HepG2 (cell line): ENCODE measurements at regions of chr13 and their contacts with region 1.

Region 1: DNA sequence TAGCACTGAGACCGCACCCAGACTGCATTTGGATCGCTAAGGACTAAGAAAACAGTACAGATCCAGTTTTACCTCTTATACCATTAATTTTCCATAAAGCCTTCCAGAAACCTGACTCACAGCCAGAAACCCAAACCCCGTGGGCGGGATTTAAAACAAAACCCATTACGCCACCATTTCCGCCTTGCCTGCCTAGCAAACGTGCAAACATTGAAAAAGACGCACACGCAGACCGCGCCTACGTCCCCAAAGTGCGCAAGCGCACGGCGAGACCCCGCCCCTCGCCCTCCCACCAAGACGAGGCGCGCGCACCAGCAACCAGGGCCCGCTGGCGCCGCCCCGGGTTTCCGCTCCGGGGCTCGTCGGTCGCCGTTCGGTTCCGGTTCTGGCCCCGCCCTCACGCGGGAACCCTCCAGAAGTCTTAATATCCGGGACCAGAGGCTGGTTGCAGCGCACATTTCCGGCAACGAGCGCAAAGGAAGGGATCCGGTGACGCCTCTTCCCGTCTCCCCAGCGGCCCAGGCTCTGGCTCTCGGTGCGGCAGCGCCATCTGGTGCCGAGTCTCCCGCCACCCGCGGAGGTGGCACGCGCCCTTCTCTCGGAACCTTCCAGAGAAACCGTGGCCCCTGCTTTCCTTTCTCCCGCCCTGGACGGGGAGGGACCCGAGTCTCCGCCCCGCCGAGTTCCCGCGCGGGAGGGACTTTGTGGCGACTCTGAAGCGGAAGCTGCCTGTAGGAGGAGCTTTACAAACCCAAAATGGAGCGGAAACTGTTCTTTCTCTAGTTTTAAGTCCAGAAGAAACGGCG is 256.9 kb upstream of the STARD13 start:
- DNase-seq: peak; percentile 96
- ATAC-seq: peak; percentile 96
- H3K4me3 ChIP-seq: peak overlapping the region; percentile 57 to 85 (median 74)
- H3K27ac ChIP-seq: peak overlapping the region; percentile 99
- H3K4me1 ChIP-seq: peaks cover 42% of the 10 kb centered on the region
- H3K27me3 ChIP-seq: no peaks in the 10 kb centered on the region; a peak in 1 of 5 replicates
- CTCF ChIP-seq: peak; percentile 99
- EP300 ChIP-seq: peak in 1 of 2 experiments; percentile 77; a peak in 2 of 4 replicates
- POLR2A ChIP-seq: peak; percentile 57 to 81; a peak in 3 of 4 replicates
- RAD21 ChIP-seq: peak; percentile 99

Region 2: DNA sequence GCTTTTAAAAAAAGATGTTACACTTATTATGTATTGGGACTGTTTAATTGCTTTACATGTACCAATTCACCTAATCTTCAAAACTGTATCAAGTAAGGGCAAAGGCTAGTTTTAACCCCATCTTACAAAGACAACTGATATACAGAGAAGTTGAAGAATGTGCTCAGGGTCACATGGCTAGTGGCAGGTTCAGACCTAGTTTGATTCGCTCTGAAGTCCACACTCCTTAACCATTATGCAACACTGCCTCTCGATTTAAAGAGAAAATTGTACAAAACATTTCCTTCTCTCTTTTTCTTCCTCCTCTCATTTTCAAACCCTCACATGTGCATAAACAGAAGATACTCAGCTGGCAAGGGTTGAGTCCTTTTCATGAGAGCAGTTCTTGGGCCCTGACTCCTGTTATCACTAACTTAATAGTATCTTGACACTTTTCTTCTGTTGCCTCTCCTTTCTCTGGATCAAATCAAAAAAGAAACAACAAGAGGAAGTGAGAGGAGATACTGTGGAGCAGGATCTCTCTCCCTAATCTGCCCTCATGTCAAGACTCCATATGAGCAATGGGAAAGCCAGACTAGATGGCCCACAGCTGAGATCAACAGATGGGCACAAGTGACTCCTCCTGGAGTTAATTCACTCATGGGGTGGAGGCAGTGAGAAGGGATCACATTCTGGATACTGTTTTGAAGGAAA is 1095.6 kb before region 1 on chr13:
- CTCF ChIA-PET with region 1: no interaction called
- POLR2A ChIA-PET with region 1: no interaction called
- in situ Hi-C with region 1: no loop called
- intact Hi-C with region 1: no loop called
- DNase-seq: no peak
- ATAC-seq: peak; percentile 17; the same call in 2 of the 3 replicates
- H3K4me3 ChIP-seq: peak overlapping the region in 1 of 3 experiments; percentile 12; a peak in 1 of 6 replicates
- H3K27ac ChIP-seq: peak overlapping the region; percentile 66
- H3K4me1 ChIP-seq: peaks cover 57% of the 10 kb centered on the region
- H3K27me3 ChIP-seq: no peaks in the 10 kb centered on the region
- CTCF ChIP-seq: no peak
- EP300 ChIP-seq: no peak
- POLR2A ChIP-seq: no peak
- RAD21 ChIP-seq: no peak

Region 3: DNA sequence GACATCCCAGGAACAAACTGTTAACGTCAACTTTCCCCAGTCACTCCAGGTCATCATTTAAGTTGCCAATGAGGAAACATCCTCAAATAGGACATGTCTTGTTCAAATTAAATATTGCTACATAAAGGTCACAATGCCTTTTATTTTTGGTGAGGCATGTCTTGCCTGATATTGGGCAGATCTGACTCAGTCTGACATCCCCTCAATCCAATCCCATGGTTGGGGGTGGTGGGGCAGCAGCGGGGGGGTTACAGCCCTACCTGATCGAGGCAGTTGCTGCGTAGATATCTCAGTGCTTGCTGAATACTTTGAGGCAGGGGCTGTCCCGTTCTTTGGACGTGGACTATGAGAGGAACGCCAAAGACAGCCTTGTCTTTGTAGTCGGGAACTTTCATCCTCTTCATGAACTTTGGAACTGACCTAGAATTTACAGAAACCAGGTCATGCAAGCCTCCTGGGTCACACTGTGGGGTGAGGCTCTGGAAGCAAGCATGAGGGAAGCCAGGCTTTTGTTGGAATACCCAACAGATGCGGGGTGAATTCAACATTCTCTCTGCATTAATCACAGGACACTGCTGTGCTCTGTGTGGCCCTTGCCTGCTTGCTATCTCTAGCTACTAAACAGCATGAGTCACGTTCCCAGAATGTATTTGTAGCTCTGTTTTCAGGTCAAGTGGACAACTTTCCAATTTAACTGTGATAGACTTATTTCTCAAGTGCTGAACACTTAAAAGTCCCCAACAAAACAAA is 416.5 kb before region 1 on chr13:
- CTCF ChIA-PET with region 1: no interaction called
- POLR2A ChIA-PET with region 1: interaction called, 5 read pairs
- in situ Hi-C with region 1: no loop called
- intact Hi-C with region 1: loop called (anchors 2 kb)
- DNase-seq: peak; percentile 99
- ATAC-seq: peak; percentile 100
- H3K4me3 ChIP-seq: peak overlapping the region in 1 of 3 experiments; percentile 18; a peak in 1 of 6 replicates
- H3K27ac ChIP-seq: peak overlapping the region; percentile 94
- H3K4me1 ChIP-seq: peaks cover 57% of the 10 kb centered on the region
- H3K27me3 ChIP-seq: no peaks in the 10 kb centered on the region
- CTCF ChIP-seq: 0 out of 2 replicates have a peak, but pooled peaks have one; percentile 4
- EP300 ChIP-seq: peak; percentile 69 to 94
- POLR2A ChIP-seq: no peak
- RAD21 ChIP-seq: peak; percentile 35; the same call in 1 of the 2 replicates

Region 4: GRCh38 chr13:33262062-33262497 is 280.4 kb before region 1 on chr13:
- CTCF ChIA-PET with region 1: no interaction called
- POLR2A ChIA-PET with region 1: interaction called, 10 read pairs
- in situ Hi-C with region 1: no loop called
- intact Hi-C with region 1: no loop called
- DNase-seq: peak; percentile 88
- ATAC-seq: peak; percentile 86
- H3K4me3 ChIP-seq: peak overlapping the region in 2 of 3 experiments; percentile 8 to 34; a peak in 2 of 6 replicates
- H3K27ac ChIP-seq: peak overlapping the region; percentile 94
- H3K4me1 ChIP-seq: peaks cover 92% of the 10 kb centered on the region
- H3K27me3 ChIP-seq: no peaks in the 10 kb centered on the region
- CTCF ChIP-seq: peak; percentile 54
- EP300 ChIP-seq: no peak
- POLR2A ChIP-seq: peak; percentile 25 to 35; a peak in 1 of 4 replicates
- RAD21 ChIP-seq: no peak

Region 5: DNA sequence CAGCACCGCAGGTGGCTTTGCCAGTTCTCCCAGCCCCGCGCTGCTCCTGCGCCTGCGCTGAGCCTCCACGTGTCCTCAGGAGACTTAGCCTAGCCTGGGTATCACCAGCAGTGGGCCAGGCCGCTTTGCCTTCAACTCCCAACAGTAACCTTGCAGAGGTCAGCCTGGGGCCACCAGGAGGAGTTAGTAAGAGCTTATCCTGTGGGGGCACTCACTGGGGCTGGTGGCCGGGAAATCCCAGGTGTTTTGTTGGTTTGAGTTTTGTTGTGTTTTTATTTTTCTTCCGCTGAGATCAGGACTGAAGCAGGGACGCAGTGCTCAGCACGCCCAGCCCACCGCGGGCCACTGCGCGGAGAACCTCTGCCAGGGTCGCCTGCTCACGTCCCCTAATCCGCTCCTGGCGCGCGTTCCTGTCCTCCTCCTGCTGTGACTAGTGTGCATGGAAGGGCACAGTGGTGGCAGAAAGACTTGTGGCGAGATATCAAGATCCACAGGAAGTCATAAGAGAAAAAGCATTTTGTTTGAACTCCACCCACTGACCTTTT is 68.1 kb after region 1 on chr13:
- CTCF ChIA-PET with region 1: no interaction called
- POLR2A ChIA-PET with region 1: interaction called, 8 read pairs
- in situ Hi-C with region 1: no loop called
- intact Hi-C with region 1: loop called (anchors 2 kb)
- DNase-seq: peak; percentile 95
- ATAC-seq: peak; percentile 94
- H3K4me3 ChIP-seq: peak overlapping the region; percentile 55 to 70 (median 59)
- H3K27ac ChIP-seq: peak overlapping the region; percentile 99
- H3K4me1 ChIP-seq: peaks cover 62% of the 10 kb centered on the region
- H3K27me3 ChIP-seq: no peaks in the 10 kb centered on the region
- CTCF ChIP-seq: peak; percentile 58
- EP300 ChIP-seq: no peak
- POLR2A ChIP-seq: peak; percentile 66 to 72
- RAD21 ChIP-seq: peak; percentile 52

Region 6: DNA sequence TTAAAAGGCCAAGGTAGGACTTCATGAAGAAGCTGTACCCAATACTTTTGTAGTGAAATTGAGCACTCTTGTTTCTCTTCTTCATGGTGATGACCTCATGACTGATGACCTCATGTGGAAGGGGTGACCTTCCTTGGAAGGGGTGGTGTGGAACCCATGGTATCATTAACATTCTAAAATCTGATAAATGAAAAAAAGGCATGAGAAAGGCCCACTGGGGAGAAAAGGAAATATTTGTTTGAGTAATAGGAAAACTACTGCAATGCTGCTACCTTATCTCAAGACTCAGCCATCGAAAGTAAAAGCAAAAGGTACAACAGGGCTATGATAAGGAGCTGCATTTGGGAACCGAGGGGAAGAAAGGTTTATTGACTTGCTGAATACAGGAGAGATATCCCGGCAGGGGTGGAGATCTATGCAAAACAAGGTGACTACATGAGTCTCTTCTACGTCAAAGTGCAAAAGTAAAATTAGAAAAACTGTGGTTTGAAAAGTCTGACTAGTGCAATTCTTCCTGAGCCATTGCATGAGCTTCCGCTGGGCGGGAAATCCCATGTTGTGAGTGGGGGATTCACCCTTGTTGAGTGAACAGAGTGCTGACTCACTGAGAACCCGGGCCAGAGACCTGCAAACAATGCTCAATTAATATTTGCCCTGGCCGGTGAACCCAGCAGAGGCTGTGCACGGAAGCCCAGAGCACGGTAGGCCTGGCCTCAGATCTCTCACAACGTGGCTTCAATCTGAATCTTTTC is 136.6 kb after region 1 on chr13:
- CTCF ChIA-PET with region 1: no interaction called
- POLR2A ChIA-PET with region 1: interaction called, 21 read pairs
- in situ Hi-C with region 1: no loop called
- intact Hi-C with region 1: loop called (anchors 1 kb)
- DNase-seq: peak; percentile 97
- ATAC-seq: peak; percentile 97
- H3K4me3 ChIP-seq: peak overlapping the region; percentile 26 to 62 (median 52); a peak in 5 of 6 replicates
- H3K27ac ChIP-seq: peak overlapping the region; percentile 99
- H3K4me1 ChIP-seq: peaks cover 85% of the 10 kb centered on the region
- H3K27me3 ChIP-seq: no peaks in the 10 kb centered on the region; a peak in 2 of 5 replicates
- CTCF ChIP-seq: 0 out of 2 replicates have a peak, but pooled peaks have one; percentile 4
- EP300 ChIP-seq: peak; percentile 20 to 85; a peak in 2 of 4 replicates
- POLR2A ChIP-seq: peak; percentile 81 to 88
- RAD21 ChIP-seq: peak; percentile 41

Region 7: DNA sequence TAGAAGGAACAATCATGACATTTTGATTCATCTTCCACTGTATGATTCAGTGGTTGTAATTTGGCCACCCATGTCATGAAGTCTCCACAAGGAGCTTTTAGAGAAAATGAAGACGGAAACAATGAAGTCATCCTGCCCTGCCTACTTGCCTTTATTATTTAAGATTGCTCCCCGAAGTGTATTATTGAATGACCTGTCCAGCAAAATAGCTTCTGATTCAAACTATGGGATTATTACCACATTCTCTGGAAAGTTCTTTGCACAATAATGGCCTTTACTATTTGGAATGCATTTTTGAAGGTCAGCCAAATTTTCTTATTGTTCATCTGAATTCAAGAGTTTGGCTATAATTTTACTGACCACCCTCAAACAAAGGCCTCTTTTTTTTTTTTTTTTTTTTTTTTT is 197.7 kb after region 1 on chr13:
- CTCF ChIA-PET with region 1: no interaction called
- POLR2A ChIA-PET with region 1: no interaction called
- in situ Hi-C with region 1: no loop called
- intact Hi-C with region 1: no loop called
- DNase-seq: no peak
- ATAC-seq: no peak
- H3K4me3 ChIP-seq: no peak overlapping the region
- H3K27ac ChIP-seq: no peak overlapping the region
- H3K4me1 ChIP-seq: no peaks in the 10 kb centered on the region
- H3K27me3 ChIP-seq: peaks cover 0 to 12% of the 10 kb centered on the region in 2 experiments; a peak in 2 of 5 replicates
- CTCF ChIP-seq: no peak
- EP300 ChIP-seq: no peak
- POLR2A ChIP-seq: no peak
- RAD21 ChIP-seq: no peak

Region 8: DNA sequence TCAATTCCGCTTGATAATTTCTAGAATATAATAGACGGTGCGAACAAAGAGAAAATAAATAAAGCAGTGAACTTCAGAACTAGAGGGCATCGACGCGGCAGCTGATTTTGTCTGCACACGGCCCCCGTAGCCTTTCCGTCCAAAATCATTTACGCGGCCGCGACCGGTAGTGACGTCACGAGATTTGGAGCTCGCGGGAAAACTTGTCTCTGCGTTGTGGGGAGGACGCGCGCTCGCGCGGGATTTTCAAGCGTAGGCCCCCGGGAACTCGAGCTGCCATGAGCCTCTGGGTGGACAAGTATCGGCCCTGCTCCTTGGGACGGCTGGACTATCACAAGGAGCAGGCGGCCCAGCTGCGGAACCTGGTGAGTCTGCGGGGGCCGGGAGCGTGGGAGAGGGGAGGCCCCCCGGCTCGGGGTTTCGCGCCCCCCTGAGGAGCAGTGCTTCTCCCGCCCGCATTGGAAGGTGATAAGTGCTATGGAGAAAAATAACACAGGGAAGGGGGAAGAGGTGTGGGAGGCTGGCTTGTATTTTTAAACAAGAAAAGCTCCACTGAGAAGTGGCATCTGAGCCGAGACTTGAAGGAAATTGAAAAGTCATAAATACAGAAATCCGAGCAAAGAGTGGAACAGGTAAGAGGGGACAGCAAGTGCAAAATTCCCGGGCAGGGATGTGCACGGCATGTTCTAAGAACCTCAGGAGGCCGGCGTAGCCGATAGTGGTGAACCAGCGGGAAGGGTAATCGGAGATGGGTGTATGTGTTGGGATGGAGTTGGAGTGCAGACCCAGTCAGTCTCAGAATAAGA is 275.6 kb after region 1 on chr13 and contains the start of gene RFC3:
- CTCF ChIA-PET with region 1: no interaction called
- POLR2A ChIA-PET with region 1: no interaction called
- in situ Hi-C with region 1: no loop called
- intact Hi-C with region 1: loop called (anchors 5 kb)
- DNase-seq: peak; percentile 90
- ATAC-seq: peak; percentile 97
- H3K4me3 ChIP-seq: peak within 1 kb of the TSS; percentile 65 to 90 (median 77)
- H3K27ac ChIP-seq: peak within 1 kb of the TSS; percentile 77
- H3K4me1 ChIP-seq: peaks cover 57% of the 10 kb centered on the region
- H3K27me3 ChIP-seq: no peaks in the 10 kb centered on the region; a peak in 1 of 5 replicates
- CTCF ChIP-seq: peak; percentile 32; the same call in 1 of the 2 replicates
- EP300 ChIP-seq: peak in 1 of 2 experiments; percentile 20; a peak in 1 of 4 replicates
- POLR2A ChIP-seq: peak; percentile 59 to 62; a peak in 3 of 4 replicates
- RAD21 ChIP-seq: peak; percentile 21; the same call in 1 of the 2 replicates
- total RNA-seq, gene RFC3: 55.7 and 80.1 TPM in 2 replicates